AG04450 (cell line): ENCODE measurements at regions of chr20 and their contacts with region 1.

Region 1: DNA sequence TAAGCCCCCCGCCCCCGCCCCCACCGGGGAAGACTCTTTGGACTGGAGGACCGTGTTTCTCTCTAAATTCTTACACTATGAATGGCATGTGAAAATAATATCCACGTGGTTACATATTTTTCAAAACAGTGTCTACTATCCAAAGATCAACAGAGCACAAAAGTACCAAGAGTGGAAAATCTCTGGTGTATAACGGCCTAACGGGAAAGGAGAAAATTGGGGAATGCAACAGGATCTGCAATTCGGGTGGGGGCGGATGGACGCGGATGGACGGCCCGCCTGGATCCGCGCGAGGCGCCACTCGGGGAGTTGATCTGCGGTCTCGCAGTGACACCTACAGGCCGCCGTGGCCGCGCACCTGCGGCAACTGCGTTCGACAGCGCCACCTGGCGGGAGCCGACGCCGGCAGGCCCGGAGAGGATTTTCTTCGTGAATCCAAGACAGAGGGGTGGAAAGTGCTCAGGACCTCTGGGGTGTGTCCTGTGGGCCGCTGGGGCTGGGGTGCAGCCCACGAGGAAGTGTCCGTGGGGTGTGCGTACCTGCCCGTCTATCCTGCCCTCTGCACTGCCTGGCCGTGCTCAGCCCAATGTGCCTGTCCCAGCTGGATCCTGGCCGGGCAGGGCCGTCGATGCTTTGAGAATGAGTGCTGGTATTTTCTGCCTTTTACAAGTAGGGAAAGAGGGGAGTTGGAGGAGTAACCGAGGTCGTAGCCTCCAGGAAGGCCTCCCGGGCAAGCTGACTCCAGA is 18.6 kb downstream of the ANKRD60 start:
- DNase-seq: peak; percentile 48
- H3K4me3 ChIP-seq: no peak overlapping the region
- H3K27ac ChIP-seq: no peak overlapping the region
- H3K27me3 ChIP-seq: peaks cover 7% of the 10 kb centered on the region
- CTCF ChIP-seq: peak; percentile 100

Region 2: GRCh38 chr20:57514273-57514751 is 695.5 kb before region 1 on chr20:
- CTCF ChIA-PET with region 1: interaction called, 15 read pairs
- POLR2A ChIA-PET with region 1: no interaction called
- DNase-seq: peak; percentile 44
- H3K4me3 ChIP-seq: no peak overlapping the region
- H3K27ac ChIP-seq: no peak overlapping the region
- H3K27me3 ChIP-seq: peaks cover 4% of the 10 kb centered on the region
- CTCF ChIP-seq: peak; percentile 78